ENCODE measurements at regions of chr2 and their contacts with region 1.

Region 1: DNA sequence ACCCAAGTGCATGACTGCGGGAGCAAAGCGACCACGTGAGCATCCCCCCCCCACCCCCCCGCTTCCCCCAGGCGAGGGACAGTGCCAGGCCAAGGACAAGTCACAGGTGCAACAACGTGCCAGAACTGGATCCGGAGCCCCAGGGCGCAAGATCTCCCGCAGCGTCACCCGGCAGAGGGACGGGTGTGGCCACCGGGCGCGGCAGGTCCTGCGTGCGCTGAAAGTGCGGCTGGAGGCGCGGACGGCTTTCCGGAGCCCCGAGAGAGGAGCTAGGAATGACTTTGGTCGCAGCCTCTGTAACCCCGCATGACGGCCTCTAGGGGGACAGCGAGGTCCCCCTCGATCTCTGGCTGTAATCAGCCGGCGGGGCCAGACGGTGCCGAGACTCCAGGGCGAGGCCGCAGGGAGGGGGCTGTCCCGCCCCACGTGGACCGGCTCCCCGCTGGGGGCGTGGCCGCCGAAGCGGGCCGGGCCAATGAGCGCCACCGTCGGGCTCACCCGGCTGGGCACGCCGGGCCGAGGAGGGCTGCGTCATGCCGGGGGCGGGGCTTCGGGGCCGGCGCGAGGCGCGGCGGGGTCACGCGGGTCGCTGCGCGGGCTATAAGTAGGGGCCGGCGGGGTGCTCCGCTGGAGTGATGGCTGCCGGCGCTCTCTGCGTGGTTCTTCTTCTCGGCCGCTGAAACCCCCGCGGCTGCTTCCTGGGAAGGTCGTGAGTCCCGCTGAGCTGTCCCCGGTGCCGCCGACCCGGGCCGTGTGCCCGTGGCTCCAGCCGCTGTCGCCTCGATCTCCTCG is at the start of gene SLC20A1:
- DNase-seq: peak; percentile 93 to 98
- H3K4me3 ChIP-seq: peak within 1 kb of the TSS; percentile 99
- H3K27ac ChIP-seq: peak within 1 kb of the TSS; percentile 99
- H3K4me1 ChIP-seq: peaks cover 68% of the 10 kb centered on the region
- H3K27me3 ChIP-seq: no peaks in the 10 kb centered on the region
- CTCF ChIP-seq: peak; percentile 66
- total RNA-seq, gene SLC20A1: 99.9 and 106 TPM in 2 replicates

Region 2: GRCh38 chr2:112584134-112584890 is 61.2 kb before region 1 on chr2 and contains the start of gene CHCHD5:
- CTCF ChIA-PET with region 1: interaction called, 8 read pairs
- POLR2A ChIA-PET with region 1: interaction called, 10 read pairs
- intact Hi-C with region 1: loop called (anchors 1 kb)
- DNase-seq: peak; percentile 86 to 90
- H3K4me3 ChIP-seq: peak within 1 kb of the TSS; percentile 91
- H3K27ac ChIP-seq: peak within 1 kb of the TSS; percentile 92
- H3K4me1 ChIP-seq: peaks cover 24% of the 10 kb centered on the region
- H3K27me3 ChIP-seq: no peaks in the 10 kb centered on the region
- CTCF ChIP-seq: no peak; the same call in 1 of the 2 replicates
- total RNA-seq, gene CHCHD5: 38.4 and 64.3 TPM in 2 replicates

Region 3: GRCh38 chr2:112601751-112602150 is 43.8 kb before region 1 on chr2:
- CTCF ChIA-PET with region 1: no interaction called
- POLR2A ChIA-PET with region 1: interaction called, 6 read pairs
- intact Hi-C with region 1: loop called (anchors 1 kb)
- DNase-seq: no peak
- H3K4me3 ChIP-seq: no peak overlapping the region
- H3K27ac ChIP-seq: no peak overlapping the region
- H3K4me1 ChIP-seq: peaks cover 23% of the 10 kb centered on the region
- H3K27me3 ChIP-seq: no peaks in the 10 kb centered on the region
- CTCF ChIP-seq: no peak

Region 4: GRCh38 chr2:112634153-112634873 is 11.2 kb before region 1 on chr2:
- CTCF ChIA-PET with region 1: interaction called, 19 read pairs
- POLR2A ChIA-PET with region 1: interaction called, 4 read pairs
- intact Hi-C with region 1: loop called (anchors 1 kb)
- DNase-seq: no peak
- H3K4me3 ChIP-seq: no peak overlapping the region
- H3K27ac ChIP-seq: no peak overlapping the region
- H3K4me1 ChIP-seq: peaks cover 34% of the 10 kb centered on the region
- H3K27me3 ChIP-seq: no peaks in the 10 kb centered on the region
- CTCF ChIP-seq: no peak

Region 5: GRCh38 chr2:112706170-112706664 is 60.7 kb after region 1 on chr2:
- CTCF ChIA-PET with region 1: interaction called, 12 read pairs
- POLR2A ChIA-PET with region 1: no interaction called
- intact Hi-C with region 1: no loop called
- DNase-seq: peak; percentile 50 to 60
- H3K4me3 ChIP-seq: no peak overlapping the region
- H3K27ac ChIP-seq: no peak overlapping the region
- H3K4me1 ChIP-seq: peaks cover 10% of the 10 kb centered on the region
- H3K27me3 ChIP-seq: no peaks in the 10 kb centered on the region
- CTCF ChIP-seq: no peak

Region 6: DNA sequence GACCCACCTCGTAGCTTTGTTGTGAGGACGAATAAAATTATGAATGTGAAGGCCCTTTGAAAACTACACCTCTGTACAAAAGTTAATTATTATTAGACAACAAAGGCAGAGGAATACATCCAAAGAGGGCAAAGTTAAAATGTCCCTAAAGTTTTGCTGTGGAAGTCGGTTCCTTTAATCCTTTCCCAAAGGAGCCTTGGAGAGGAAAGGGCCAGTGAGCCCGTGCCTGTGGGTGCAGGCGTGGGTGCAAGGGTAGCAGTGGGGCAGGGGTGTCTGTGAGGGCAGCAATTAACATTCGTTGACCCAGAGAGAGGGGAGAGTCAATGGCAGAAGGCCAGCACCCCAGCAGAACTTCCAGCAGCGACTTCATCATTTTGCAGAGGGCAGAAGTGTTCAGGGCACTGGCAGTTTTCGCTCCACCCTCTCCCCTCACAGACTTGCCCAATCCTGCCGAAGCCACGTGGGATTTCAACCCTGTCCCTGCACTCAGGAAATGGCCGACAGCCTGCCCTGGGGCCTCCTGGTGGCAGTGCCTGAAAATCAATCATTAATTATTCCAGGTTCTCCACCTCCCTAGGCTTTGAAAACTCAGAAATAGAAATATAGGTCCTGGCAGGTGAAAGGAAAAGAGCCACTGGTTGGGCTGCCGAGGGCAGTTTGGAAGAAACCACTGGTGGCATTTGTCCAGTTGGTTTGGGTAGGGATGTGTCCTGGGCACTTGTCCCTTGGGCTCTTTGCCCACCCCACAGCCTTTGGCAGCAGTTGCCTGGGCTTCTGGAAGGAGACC is 637.4 kb after region 1 on chr2:
- CTCF ChIA-PET with region 1: no interaction called
- POLR2A ChIA-PET with region 1: no interaction called
- intact Hi-C with region 1: loop called (anchors 5 kb)
- DNase-seq: peak; percentile 62 to 79
- H3K4me3 ChIP-seq: no peak overlapping the region
- H3K27ac ChIP-seq: peak overlapping the region; percentile 99
- H3K4me1 ChIP-seq: peaks cover 65% of the 10 kb centered on the region
- H3K27me3 ChIP-seq: no peaks in the 10 kb centered on the region
- CTCF ChIP-seq: peak; percentile 54; the same call in 1 of the 2 replicates